Mammary epithelial cell (primary cell): ENCODE measurements at regions of chr2 and their contacts with region 1.

Region 1: GRCh38 chr2:42828487-42829425 is 36.4 kb upstream of the HAAO start:
- DNase-seq: peak; percentile 58
- H3K4me3 ChIP-seq: no peak overlapping the region
- H3K27ac ChIP-seq: no peak overlapping the region
- H3K4me1 ChIP-seq: peaks cover 18% of the 10 kb centered on the region
- H3K27me3 ChIP-seq: no peaks in the 10 kb centered on the region
- CTCF ChIP-seq: peak; percentile 90

Region 2: DNA sequence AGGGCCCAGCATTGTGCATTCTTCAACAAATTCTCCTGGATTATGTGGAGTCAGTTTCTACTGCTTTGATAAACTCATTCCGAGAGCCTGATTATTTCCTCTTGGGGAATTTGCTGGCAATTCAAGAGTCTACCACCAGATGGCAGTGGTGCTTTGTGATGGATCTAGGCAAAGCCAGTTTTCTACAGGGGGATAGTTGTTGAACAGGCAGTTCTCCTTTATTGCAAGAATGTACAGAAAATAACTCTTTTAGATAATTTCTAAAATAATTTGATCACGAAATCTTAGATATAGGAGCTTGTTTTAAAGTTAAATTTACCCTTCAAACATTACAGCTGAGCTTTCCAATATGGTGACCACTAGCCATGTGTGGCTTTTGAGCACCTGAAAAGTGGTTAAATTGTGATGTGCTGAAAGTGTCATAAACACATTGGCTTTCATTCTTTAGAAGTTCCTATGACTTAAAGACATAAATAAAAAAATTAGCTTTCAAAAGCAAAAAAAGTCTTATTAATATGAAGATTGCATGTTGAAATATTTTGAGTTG is 30.3 kb after region 1 on chr2:
- CTCF ChIA-PET with region 1: no interaction called
- dilution Hi-C with region 1: no loop called
- in situ Hi-C with region 1: no loop called
- intact Hi-C with region 1: loop called (anchors 1 kb)
- DNase-seq: peak; percentile 63
- H3K4me3 ChIP-seq: no peak overlapping the region
- H3K27ac ChIP-seq: no peak overlapping the region
- H3K4me1 ChIP-seq: peaks cover 35% of the 10 kb centered on the region
- H3K27me3 ChIP-seq: no peaks in the 10 kb centered on the region
- CTCF ChIP-seq: peak; percentile 93 to 95

Region 3: GRCh38 chr2:42944779-42945415 is 116.1 kb after region 1 on chr2:
- CTCF ChIA-PET with region 1: interaction called, 4 read pairs
- dilution Hi-C with region 1: loop called (anchors 5 kb)
- in situ Hi-C with region 1: no loop called
- intact Hi-C with region 1: loop called (anchors 1 kb)
- DNase-seq: peak; percentile 59
- H3K4me3 ChIP-seq: no peak overlapping the region
- H3K27ac ChIP-seq: no peak overlapping the region
- H3K4me1 ChIP-seq: peaks cover 5% of the 10 kb centered on the region
- H3K27me3 ChIP-seq: no peaks in the 10 kb centered on the region
- CTCF ChIP-seq: no peak

Region 4: GRCh38 chr2:43219383-43220228 is 390.9 kb after region 1 on chr2:
- CTCF ChIA-PET with region 1: no interaction called
- dilution Hi-C with region 1: loop called (anchors 5 kb)
- in situ Hi-C with region 1: no loop called
- intact Hi-C with region 1: no loop called
- DNase-seq: peak; percentile 88
- H3K4me3 ChIP-seq: peak overlapping the region; percentile 37 to 44 (median 41)
- H3K27ac ChIP-seq: peak overlapping the region; percentile 88
- H3K4me1 ChIP-seq: peaks cover 46% of the 10 kb centered on the region
- H3K27me3 ChIP-seq: no peaks in the 10 kb centered on the region
- CTCF ChIP-seq: peak in 1 of 2 donors; percentile 3

Region 5: DNA sequence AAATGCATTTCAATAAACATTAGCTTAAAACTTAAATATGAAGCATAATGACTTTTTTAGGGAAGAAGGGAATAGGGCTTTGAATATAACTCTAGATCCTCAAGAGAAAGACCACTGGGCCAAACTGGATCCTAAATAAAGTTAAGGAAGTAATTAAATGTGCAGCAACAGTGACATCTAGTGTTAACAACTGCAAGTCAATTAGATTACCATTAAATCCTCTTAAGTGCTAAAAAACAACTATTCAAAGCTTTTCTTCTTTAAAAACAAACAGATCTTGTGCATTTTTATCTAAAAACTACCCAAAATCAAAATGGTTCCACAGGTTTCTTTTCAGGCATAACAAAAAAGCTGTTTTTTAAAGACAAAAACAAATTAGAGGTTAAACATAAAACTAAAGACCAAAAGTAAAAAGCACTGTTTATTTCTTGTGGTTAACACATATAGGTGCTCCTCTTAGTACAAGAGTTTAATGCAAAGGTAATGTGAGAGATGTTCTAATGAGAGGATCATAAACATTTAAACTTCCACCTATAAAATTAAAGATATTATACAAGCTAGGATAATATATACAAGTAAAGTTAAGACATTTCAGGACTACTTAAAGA is 655.7 kb after region 1 on chr2:
- CTCF ChIA-PET with region 1: no interaction called
- dilution Hi-C with region 1: no loop called
- in situ Hi-C with region 1: loop called in 1 of 2 experiments (anchors 10 kb)
- intact Hi-C with region 1: loop called (anchors 1 kb)
- DNase-seq: peak; percentile 50
- H3K4me3 ChIP-seq: no peak overlapping the region
- H3K27ac ChIP-seq: no peak overlapping the region
- H3K4me1 ChIP-seq: peaks cover 9% of the 10 kb centered on the region
- H3K27me3 ChIP-seq: no peaks in the 10 kb centered on the region
- CTCF ChIP-seq: peak; percentile 45 to 51

Region 6: DNA sequence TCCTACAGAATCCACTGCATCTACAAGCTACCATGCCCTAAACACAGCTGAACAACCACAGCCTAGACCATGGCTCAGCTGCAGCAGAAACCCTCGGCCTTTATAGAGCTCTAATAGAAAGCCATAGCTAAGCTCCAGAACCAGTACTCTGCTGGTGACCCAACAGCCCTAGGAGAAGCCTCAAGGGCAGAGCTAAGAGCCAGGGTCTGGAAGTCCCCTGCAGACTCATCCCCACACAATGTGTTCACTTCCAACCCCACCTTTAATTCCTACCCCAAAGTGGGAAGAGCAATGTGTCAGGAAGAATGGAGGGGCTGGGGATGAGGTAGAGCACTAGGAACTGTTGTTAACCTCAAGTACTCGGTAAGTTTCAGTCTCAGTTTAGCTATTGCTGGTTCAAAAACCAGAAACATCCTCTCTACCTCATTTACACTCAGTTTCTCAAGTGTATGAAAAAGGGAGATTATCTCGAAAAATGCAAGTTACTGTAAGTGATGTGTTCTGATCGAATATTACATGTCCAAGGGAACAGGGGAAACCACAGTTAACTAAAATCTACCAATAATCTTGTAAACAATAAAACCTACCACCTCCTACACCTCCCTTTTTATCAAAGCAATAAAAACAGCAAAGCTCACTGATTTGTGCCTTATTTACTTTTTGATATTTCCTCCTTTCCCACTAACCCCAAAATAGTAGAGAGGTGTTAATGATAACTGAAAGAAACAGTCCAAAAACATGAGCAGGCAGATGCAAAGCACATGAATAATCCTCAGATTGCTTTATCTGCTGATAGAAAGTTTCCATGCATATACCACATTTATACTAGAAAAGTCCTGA is 730.9 kb after region 1 on chr2:
- CTCF ChIA-PET with region 1: no interaction called
- dilution Hi-C with region 1: no loop called
- in situ Hi-C with region 1: loop called (anchors 25 kb)
- intact Hi-C with region 1: no loop called
- DNase-seq: no peak
- H3K4me3 ChIP-seq: no peak overlapping the region
- H3K27ac ChIP-seq: no peak overlapping the region
- H3K4me1 ChIP-seq: no peaks in the 10 kb centered on the region
- H3K27me3 ChIP-seq: no peaks in the 10 kb centered on the region
- CTCF ChIP-seq: no peak

Region 7: DNA sequence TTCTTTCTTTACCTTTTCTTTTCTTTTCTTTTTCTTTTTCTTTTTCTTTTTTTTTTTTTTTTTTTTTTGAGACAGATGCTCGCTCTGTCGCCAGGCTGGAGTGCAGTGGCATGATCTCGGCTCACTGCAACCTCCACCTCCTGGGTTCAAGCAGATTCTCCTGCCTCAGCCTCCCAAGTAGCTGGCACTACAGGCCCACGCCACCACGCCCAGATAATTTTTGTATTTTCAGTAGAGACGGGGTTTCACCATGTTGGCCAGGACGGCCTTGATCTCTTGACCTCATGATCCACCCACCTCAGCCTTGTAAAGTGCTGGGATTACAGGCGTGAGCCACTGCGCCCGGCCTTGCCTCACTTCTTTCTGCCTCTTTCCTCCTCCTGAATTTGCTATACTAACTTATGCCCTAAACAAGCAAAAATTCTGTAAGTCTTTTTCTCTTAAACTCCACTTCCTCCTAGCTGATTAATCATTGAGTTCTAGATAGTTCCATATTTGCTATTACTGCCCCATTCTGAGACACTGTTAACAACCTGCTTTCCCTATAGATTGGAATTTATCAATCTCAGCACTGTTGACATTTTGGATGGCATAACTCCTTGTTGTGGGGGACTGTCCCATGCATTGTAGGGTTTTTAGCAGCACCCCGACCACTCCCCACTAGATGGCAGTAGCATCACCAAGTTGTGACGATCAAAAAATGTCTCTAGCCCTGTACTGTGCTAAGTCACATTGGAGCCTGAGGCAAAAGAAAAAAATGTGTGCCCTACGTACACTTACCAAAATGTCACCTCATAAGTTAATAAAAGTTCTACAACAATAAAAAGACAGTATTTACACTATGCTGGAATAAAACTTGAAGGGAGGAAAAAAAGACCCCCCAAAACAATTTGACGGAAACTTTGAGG is 783.5 kb after region 1 on chr2:
- CTCF ChIA-PET with region 1: interaction called, 10 read pairs
- dilution Hi-C with region 1: no loop called
- in situ Hi-C with region 1: no loop called
- intact Hi-C with region 1: loop called (anchors 1 kb)
- DNase-seq: peak; percentile 58
- H3K4me3 ChIP-seq: no peak overlapping the region
- H3K27ac ChIP-seq: no peak overlapping the region
- H3K4me1 ChIP-seq: no peaks in the 10 kb centered on the region
- H3K27me3 ChIP-seq: no peaks in the 10 kb centered on the region
- CTCF ChIP-seq: peak; percentile 77 to 87